Astrocyte of the cerebellum (primary cell): ENCODE measurements at regions of chr17 and their contacts with region 1.

Region 1: DNA sequence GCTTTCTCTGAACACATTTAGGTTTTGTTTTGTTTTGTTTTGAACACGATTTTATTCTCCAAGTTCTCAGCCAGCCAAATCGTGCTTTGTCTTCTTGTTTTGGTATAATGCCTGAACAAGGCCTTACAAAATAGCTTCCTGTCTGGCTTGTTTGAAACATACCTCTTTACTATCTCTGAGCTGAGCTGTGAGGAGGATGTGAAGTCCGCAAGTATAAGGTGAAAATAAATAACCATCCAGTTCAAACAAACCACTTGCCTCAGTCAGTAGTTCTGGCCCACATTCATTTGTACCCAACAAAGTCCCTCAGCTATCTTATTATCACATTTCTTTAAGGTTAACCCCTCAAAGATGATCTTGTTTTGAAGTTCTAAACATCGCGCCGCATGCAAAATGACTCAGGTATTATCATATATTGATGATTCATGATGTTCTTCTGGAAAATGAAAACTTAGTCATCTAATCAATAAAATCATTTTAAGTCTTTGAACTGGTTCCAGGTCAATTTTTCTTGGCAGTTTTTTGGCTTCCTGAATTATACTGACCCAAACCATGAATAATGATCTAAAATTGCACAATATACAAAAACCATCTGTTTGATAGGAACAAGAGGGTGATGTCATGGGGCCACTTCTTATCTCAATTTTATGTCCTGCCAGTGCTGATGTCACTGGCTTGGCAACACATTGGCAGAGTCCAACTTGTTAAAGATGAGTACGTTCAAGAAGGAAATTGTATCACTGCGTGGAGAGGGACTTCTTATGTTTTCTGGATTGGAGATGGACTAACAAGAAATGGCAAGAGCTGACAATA is 694.3 kb downstream of the KCNJ2 start:
- DNase-seq: no peak
- H3K4me3 ChIP-seq: no peak overlapping the region
- CTCF ChIP-seq: no peak

Region 2: DNA sequence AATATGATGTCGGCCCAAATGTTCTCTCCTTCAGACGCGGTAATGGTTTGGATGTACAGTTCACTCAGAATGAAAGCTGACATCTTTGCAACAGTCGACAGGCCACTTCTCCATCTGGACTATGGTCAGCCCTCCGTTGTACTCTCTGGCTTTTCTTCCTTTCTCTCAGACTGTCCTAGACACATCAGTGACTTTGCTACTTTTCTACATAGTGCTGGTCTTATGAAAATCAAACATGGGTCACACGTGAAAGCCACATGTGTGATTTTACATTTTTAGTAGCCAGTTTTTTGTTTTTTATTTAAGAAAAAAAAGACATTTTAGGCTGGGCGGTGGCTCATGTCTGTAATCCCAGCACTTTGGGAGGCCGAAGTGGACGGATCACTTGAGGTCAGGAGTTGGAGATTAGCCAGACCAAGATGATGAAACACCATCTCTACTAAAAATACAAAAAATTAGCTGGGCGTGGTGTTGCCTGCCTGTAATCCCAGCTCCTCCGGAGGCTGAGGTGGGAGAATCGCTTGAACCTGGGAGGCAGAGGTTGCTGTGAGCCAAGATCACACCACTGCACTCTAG is 50.2 kb before region 1 on chr17:
- in situ Hi-C with region 1: no loop called
- DNase-seq: no peak
- H3K4me3 ChIP-seq: no peak overlapping the region
- CTCF ChIP-seq: no peak

Region 3: DNA sequence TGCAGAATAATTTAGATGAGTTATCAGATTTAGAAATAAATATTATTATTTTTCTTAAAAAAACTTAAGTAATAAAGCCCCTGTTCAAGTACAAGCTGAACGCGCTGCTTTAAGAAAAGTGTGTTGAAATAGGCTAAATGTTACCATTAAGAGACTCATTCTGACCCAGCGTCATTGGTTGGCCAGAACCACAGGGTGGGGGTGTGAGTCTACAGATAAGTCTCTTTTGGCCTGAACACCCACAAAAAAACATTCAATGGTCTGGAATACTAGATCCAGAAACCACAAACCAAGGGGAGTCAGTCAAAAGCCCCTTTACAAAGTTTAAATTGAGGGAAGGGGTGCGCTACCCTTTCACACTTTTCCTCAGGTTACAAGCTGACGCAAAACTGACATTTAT is 81.7 kb after region 1 on chr17:
- in situ Hi-C with region 1: loop called (anchors 5 kb)
- DNase-seq: no peak
- H3K4me3 ChIP-seq: no peak overlapping the region
- CTCF ChIP-seq: no peak

Region 4: GRCh38 chr17:71409712-71410111 is 546.1 kb after region 1 on chr17:
- in situ Hi-C with region 1: no loop called
- DNase-seq: no peak
- H3K4me3 ChIP-seq: no peak overlapping the region
- CTCF ChIP-seq: no peak